Adrenal gland (tissue), 19 donors: ENCODE measurements at regions of chr17 and their contacts with region 1.

Region 1: GRCh38 chr17:1186923-1187771 is 7.4 kb upstream of the ABR start:
- DNase-seq: peak; percentile 86 to 92 (median 89)
- H3K4me3 ChIP-seq: no peak overlapping the region
- H3K27ac ChIP-seq: peak overlapping the region in 2 of 5 donors; percentile 43 to 54
- H3K4me1 ChIP-seq: peaks cover 11 to 28% of the 10 kb centered on the region in 2 donors
- H3K27me3 ChIP-seq: no peaks in the 10 kb centered on the region
- CTCF ChIP-seq: peak; percentile 95 to 99 (median 98)
- POLR2A ChIP-seq: peak in 1 of 2 donors; percentile 42

Region 2: GRCh38 chr17:1005361-1005946 is 181.7 kb before region 1 on chr17:
- intact Hi-C with region 1: no loop called
- DNase-seq: peak; percentile 81 to 90 (median 88)
- H3K4me3 ChIP-seq: peak overlapping the region in 1 of 4 donors; percentile 25
- H3K27ac ChIP-seq: peak overlapping the region; percentile 44 to 96 (median 74)
- H3K4me1 ChIP-seq: peaks cover 32 to 60% of the 10 kb centered on the region in 2 donors
- H3K27me3 ChIP-seq: no peaks in the 10 kb centered on the region
- CTCF ChIP-seq: no peak
- POLR2A ChIP-seq: peak in 1 of 2 donors; percentile 48

Region 3: DNA sequence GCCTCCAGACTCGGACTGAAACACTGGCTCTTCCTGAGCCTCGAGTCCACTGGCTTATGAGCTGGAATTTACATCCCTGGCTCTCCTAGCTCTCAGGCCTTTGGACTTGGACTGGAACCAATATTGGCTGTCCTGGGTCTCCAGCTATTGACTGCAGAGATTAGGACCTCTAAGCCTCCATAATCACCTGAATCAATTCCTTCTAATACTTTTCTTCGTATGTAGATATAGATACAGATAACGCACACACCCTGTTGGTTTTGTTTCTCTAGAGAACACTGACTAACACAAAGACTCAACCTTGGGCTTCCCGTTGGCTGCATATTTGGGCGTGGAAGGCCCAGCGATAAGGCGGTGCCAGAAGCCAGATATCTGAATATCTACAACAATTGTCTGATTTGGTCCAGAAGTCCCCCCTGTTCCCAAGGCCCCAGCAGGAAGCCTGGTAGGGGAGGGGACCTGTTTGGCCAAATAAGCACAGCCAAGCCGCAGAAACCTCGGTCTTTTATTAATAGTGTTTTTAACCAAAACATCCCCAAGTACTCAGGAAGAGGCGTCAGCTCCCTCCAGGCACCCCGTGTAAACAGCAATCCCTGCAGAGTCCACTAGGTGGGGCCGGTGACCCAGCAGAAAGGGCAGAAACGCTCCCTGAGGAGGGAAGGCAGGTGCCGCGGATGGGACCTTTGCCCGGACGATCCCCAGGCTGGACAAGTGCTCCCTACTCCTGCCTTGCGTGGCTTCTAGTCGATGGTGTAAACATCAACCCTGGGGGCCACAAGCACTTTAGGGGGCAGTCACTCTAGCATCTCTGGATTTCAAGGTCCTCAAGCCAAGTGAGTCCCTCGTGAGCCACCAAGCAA is 64.4 kb before region 1 on chr17:
- intact Hi-C with region 1: loop called (anchors 2 to 5 kb)
- DNase-seq: peak; percentile 85 to 94 (median 89)
- H3K4me3 ChIP-seq: no peak overlapping the region
- H3K27ac ChIP-seq: peak overlapping the region in 4 of 5 donors; percentile 46 to 76 (median 59)
- H3K4me1 ChIP-seq: peaks cover 11 to 16% of the 10 kb centered on the region in 2 donors
- H3K27me3 ChIP-seq: no peaks in the 10 kb centered on the region
- CTCF ChIP-seq: peak; percentile 75 to 98 (median 94)
- POLR2A ChIP-seq: no peak